ENCODE measurements at regions of chr10 and their contacts with region 1.

Region 1: DNA sequence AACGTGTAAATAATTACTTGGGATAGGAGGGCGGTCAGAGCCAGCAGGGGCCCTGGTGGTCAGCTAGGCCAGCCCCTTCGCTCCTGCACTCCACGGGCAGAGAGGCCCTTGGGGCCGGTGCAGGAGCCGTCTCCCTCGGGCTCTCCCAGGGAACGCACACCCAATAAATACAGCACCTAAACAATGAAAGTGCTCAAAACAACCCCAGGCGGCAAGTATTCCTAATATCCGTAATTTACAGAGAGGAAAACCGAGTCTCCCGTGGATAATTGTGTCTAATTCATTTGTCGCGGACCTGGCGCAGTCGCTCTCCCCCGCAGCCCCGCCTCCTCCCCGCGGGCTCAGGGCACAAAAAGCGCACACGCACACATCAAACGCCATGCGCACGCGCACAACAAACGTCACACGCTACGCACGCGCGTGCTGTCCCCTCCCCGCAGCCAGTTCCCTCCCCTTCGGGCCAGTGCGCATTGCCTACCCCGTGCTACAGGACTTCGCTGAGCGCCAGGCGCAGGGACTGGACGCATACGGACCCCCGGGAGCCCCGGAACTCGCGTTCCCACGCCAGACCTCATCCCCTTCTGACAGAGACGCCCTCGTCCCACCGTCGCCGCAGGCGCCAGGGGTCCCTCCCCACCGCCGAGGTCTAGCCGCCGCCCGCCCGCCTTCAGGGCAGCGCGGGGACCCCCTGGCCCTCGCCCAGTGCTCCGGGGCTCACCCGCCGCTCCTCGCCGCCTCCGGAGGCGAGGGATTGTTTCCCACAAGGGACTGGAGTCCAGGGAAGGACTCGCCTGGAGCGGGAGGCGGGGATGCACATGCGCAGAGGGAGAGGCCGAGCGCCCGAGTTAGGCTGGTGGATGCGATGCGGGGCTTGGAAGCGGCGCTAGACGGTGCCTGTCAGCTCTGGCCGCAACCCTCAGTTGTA is at the start of gene ZNF248:
- DNase-seq: peak; percentile 94 to 96
- ATAC-seq: peak; percentile 97 to 99
- H3K4me3 ChIP-seq: peak within 1 kb of the TSS; percentile 85 to 95 (median 89)
- H3K27ac ChIP-seq: peak within 1 kb of the TSS; percentile 99 to 100 (median 100)
- H3K4me1 ChIP-seq: peaks cover 32 to 34% of the 10 kb centered on the region in 2 donors
- H3K27me3 ChIP-seq: no peaks in the 10 kb centered on the region
- CTCF ChIP-seq: peak in 1 of 5 experiments; percentile 20
- POLR2A ChIP-seq: peak; percentile 94 to 95
- total RNA-seq, gene ZNF248: 2.1 to 17.3 (median 7.8) TPM

Region 2: DNA sequence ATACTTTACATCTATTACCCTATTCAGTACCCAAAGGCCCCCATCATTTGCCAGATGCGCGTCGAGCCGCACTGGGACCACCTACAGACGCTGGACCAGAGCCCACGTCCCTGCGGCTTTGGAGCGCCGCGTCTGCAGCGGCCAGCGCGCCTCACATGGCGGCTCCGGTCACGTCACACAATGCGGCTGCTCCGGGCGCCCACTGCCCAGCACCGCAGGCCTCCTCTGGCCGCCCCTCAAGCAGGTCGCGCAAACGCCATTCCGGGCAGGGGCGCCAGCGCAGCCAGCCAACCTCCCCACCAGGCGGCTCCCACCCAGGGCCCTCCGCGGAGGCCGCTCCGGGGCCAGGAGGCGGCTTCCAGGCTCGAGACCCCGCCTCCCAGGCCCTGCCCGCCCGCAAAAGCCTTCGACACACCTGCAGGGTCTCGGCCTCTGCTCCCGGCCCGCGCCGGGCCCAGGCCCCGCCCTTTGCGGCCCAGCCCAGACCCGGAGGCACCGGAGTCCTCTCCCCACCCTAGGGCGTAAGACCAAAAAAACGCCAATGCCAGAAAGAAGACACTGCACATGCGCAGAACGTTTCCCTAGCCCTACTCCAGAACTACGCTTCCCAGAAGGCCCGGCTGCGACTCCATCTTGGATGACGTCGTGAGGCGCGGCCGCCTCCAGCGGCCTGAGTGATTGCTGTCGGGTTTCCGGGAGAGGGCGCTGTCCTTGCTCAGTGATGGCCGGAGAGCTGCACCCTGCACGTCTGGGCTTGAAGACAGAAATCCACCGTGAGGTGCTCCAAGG is 118.7 kb after region 1 on chr10 and contains the start of gene ZNF25:
- in situ Hi-C with region 1: loop called in 2 of 4 experiments (anchors 10 kb)
- intact Hi-C with region 1: loop called (anchors 1 kb)
- DNase-seq: peak; percentile 98
- ATAC-seq: peak; percentile 99
- H3K4me3 ChIP-seq: peak within 1 kb of the TSS; percentile 71 to 95 (median 84)
- H3K27ac ChIP-seq: peak within 1 kb of the TSS; percentile 94 to 98 (median 96)
- H3K4me1 ChIP-seq: peaks cover 4 to 13% of the 10 kb centered on the region in 2 donors
- H3K27me3 ChIP-seq: no peaks in the 10 kb centered on the region
- CTCF ChIP-seq: peak; percentile 79 to 95 (median 89)
- POLR2A ChIP-seq: peak; percentile 81 to 84
- total RNA-seq, gene ZNF25: 18.8 to 35.0 (median 23.4) TPM

Region 3: GRCh38 chr10:38010119-38010903 is 152.8 kb after region 1 on chr10 and contains the start of gene ZNF33A:
- in situ Hi-C with region 1: no loop called
- intact Hi-C with region 1: loop called (anchors 2 kb)
- DNase-seq: peak; percentile 90 to 94
- ATAC-seq: peak; percentile 96 to 98
- H3K4me3 ChIP-seq: peak within 1 kb of the TSS; percentile 82 to 95 (median 87)
- H3K27ac ChIP-seq: peak within 1 kb of the TSS; percentile 96 to 99 (median 98)
- H3K4me1 ChIP-seq: peaks cover 9 to 10% of the 10 kb centered on the region in 2 donors
- H3K27me3 ChIP-seq: no peaks in the 10 kb centered on the region
- CTCF ChIP-seq: peak in 1 of 5 experiments; percentile 27
- POLR2A ChIP-seq: peak; percentile 39 to 67
- total RNA-seq, gene ZNF33A: 14.3 to 31.1 (median 16.8) TPM